ENCODE measurements at regions of chr9 and their contacts with region 1.

Region 1: DNA sequence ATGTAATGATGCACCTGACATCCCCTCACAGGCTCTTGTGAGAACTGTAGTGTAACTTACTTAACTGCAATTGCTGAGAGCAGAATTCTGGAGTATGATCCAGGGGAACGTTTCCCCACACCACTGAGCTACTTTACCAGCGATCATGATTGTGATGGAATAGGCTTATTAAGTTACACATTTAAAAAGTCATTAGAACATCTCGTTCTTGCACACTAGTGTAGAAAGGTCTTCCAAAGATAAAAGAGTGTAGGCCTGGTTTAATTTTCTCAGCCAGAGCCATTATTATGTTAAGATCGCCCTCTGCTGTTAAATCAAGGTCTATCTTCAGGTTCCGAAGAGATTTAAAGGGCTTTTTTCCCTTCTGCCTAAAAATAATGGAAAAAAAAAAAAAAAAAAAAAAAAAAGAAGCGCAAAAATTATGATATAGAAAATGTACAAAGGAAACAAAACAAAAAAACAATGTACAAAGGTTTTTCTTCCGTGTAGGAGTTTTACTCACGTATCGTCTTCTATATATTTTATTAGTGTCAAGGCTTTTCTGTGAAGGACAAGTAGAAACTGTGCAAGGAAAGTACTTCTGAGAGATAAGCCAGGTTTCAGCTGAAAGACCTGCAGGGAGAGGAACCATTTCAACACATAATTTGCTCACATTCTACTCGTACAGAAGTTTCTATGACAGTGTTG is 18.6 kb upstream of the MOB3B start:
- DNase-seq: no peak
- ATAC-seq: no peak
- H3K4me3 Mint-ChIP-seq: no peak overlapping the region
- H3K27ac Mint-ChIP-seq: no peak overlapping the region
- H3K4me1 Mint-ChIP-seq: no peaks in the 10 kb centered on the region
- H3K27me3 Mint-ChIP-seq: no peaks in the 10 kb centered on the region
- CTCF ChIP-seq: no peak

Region 2: DNA sequence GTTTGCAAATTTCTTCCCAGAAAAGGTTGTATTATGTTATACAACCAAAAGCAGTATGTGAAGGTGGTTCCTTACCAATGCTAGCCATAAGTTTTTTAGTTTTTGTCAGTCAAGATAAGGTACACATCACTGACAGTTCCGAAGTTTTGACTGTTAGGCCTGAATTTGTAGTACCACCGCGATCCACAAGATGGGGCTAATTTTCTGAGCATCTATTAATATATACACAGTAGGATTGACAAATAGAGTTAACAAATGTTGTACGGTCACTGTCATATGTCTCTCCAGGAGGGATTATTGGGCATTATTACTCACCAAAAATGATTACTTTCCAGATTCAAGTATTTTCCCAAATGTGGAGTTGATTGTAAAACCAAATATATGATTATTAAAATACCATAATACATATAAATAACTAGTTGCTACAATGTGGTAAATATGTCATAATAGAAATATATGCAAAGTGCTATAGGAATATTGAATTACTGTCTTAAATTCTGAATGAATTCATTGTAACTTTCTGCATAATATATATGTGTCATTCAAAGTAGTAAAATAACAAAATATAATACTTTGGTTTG is 514.3 kb before region 1 on chr9:
- CTCF ChIA-PET with region 1: no interaction called
- POLR2A ChIA-PET with region 1: no interaction called
- intact Hi-C with region 1: loop called (anchors 1 kb)
- DNase-seq: no peak
- ATAC-seq: peak; percentile 61
- H3K4me3 Mint-ChIP-seq: no peak overlapping the region
- H3K27ac Mint-ChIP-seq: no peak overlapping the region
- H3K4me1 Mint-ChIP-seq: no peaks in the 10 kb centered on the region
- H3K27me3 Mint-ChIP-seq: no peaks in the 10 kb centered on the region
- CTCF ChIP-seq: peak; percentile 96

Region 3: DNA sequence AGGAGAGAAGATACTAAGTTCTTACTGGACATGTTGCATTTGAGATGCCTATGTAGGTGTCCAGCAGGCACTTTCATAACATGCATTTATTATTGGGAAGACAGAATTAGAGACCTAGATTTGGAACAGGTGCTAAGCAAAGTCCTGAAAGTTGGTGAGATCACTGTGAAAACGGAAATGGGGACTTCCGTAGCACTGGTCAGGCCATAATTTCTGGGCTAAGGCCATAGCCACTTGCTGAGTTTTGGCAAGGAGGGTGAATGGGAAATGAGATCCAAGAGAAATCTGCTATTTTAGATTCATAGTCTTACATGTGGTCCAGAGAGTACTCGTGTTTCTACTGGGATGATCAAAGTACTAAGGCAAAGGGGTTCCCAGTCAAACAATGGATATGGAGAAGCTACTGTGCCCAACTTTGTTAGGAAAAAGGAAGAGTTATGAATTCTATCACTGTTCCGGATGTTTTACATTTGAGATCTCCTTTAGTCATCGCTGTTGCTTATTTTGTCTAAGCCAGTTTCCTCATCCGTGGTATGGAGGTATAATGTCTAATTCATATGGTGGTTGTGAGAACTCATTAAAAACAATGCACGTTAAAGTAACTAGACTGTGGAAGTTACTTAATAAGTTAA is 405.8 kb before region 1 on chr9:
- CTCF ChIA-PET with region 1: no interaction called
- POLR2A ChIA-PET with region 1: no interaction called
- intact Hi-C with region 1: loop called (anchors 10 kb)
- DNase-seq: no peak
- ATAC-seq: no peak
- H3K4me3 Mint-ChIP-seq: no peak overlapping the region
- H3K27ac Mint-ChIP-seq: no peak overlapping the region
- H3K4me1 Mint-ChIP-seq: no peaks in the 10 kb centered on the region
- H3K27me3 Mint-ChIP-seq: no peaks in the 10 kb centered on the region
- CTCF ChIP-seq: no peak

Region 4: DNA sequence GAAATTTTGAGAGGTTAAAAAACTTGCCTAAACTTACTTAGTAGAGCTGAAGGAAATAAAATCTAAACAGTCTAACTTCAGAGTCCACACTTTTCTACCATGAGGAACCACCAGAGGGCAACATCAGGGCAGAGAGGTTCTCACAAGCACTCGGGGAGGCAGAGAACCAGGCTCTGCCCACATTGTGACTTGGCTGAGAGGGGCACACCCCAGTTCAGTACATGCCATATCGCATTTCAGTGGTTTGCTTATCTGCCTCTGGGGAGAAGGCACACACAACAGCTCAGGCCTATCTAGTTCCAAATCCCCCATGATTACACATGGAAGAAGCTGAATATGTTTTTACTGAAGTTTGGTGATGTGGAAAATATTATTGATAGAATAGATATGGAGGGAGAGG is 300.4 kb before region 1 on chr9:
- CTCF ChIA-PET with region 1: interaction called, 3 read pairs
- POLR2A ChIA-PET with region 1: no interaction called
- intact Hi-C with region 1: loop called (anchors 1 kb)
- DNase-seq: no peak
- ATAC-seq: no peak
- H3K4me3 Mint-ChIP-seq: no peak overlapping the region
- H3K27ac Mint-ChIP-seq: no peak overlapping the region
- H3K4me1 Mint-ChIP-seq: no peaks in the 10 kb centered on the region
- H3K27me3 Mint-ChIP-seq: peaks cover 13% of the 10 kb centered on the region
- CTCF ChIP-seq: no peak

Region 5: GRCh38 chr9:27276193-27277030 is 271.8 kb before region 1 on chr9:
- CTCF ChIA-PET with region 1: no interaction called
- POLR2A ChIA-PET with region 1: no interaction called
- intact Hi-C with region 1: loop called (anchors 1 kb)
- DNase-seq: no peak
- ATAC-seq: no peak
- H3K4me3 Mint-ChIP-seq: no peak overlapping the region
- H3K27ac Mint-ChIP-seq: no peak overlapping the region
- H3K4me1 Mint-ChIP-seq: peaks cover 6% of the 10 kb centered on the region
- H3K27me3 Mint-ChIP-seq: peaks cover 2% of the 10 kb centered on the region
- CTCF ChIP-seq: peak; percentile 72

Region 6: DNA sequence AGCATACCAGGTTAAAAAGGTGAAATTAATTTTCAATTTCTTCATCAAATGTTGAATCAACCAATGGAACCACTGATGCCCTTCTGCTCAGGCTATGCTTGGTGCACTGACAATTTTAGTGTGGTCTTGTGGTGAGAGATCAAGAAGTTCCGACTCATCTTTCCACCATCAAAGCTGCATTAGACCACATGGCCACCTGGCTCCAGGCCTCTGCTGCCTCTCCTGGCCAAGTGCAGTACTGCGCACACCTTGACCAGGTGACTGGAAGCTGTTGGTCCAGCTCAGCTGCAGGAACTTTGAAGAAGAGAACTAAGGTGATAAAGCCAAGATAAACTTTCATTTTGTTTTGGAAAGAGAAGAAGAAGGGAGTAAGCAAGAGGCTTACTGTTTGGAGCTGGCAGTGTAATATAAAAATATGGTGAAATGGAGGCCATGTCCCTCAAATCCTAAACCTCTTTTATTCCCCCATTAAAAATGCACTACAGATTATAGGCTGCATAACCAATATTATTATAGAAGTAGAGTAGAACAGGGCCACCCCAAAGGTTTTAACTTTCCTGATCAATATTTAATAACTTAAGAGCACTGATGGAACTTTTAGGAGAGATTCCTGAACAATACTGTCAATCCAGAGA is 340.6 kb after region 1 on chr9:
- CTCF ChIA-PET with region 1: no interaction called
- POLR2A ChIA-PET with region 1: no interaction called
- intact Hi-C with region 1: loop called (anchors 5 kb)
- DNase-seq: no peak
- ATAC-seq: peak; percentile 66
- H3K4me3 Mint-ChIP-seq: no peak overlapping the region
- H3K27ac Mint-ChIP-seq: no peak overlapping the region
- H3K4me1 Mint-ChIP-seq: no peaks in the 10 kb centered on the region
- H3K27me3 Mint-ChIP-seq: peaks cover 2% of the 10 kb centered on the region
- CTCF ChIP-seq: no peak

Measured in activated B cell treated with CpG ODN at 0.5 μM for 24 hours (primary cell).